WTC11 (cell line): ENCODE measurements at regions of chr15 and their contacts with region 1.

Region 1: DNA sequence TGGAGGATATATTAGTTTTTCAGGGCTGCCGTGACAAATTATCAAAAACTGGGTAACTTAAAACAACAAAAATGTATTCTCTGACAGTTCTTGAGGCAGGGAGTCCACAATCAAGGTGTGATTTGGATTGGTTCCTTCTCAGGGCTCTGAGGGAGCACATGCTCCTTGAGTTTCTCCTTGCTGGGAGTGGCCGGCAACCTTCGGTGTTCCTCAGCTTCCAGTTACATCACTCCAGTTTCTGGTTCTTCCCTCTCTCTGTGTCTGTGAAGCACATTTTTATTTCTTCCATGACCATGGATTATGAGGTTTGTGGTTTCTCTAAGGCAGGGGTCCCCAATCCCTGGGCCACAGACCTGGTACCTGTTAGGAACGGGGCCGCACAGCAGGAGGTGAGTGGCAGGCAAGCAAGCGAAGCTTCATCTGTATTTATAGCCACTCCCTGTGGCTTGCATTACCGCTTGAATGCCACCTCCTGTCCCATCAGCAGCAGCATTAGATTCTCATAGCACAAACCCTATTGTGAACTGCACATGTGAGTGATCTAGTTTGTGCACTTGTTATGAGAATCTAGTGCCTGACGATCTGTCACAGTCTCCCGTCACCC is 24.3 kb downstream of the LRRC28 start:
- DNase-seq: peak; percentile 22
- ATAC-seq: 0 out of 2 replicates have a peak, but pooled peaks have one; percentile 16
- H3K4me3 Mint-ChIP-seq: no peak overlapping the region
- H3K27ac Mint-ChIP-seq: no peak overlapping the region
- H3K4me1 Mint-ChIP-seq: peaks cover 8% of the 10 kb centered on the region
- H3K27me3 Mint-ChIP-seq: no peaks in the 10 kb centered on the region
- CTCF ChIP-seq: no peak

Region 2: DNA sequence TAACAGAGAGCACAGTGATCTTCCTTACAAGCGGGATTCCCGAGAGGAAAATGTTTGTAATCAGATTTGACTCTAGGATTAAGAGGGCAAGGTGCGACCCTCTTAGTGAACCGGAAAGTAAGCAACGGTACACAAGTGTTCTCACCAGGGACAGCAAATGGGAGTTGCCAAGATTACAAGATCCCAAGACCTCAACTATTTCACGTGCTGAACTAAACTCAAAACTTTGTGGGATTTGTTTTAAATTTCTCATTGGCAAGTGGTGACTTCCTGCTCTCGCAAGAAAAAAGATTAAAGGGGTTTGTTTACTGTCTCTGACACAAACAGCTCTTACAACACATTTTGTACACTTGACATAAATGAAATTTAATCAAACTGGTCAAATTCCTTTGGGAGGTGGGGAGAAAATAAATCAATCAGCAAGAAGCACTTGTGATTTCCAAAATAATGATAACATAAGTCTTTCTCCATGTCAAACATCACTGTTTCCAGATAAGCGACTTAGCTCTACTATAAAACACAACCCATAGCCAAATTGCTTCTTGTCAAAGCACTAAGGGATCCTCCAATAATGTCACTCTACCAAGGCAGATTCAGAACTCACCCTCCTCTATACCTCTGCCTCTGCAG is 265.8 kb before region 1 on chr15:
- CTCF ChIA-PET with region 1: no interaction called
- POLR2A ChIA-PET with region 1: no interaction called
- DNase-seq: no peak
- ATAC-seq: no peak
- H3K4me3 Mint-ChIP-seq: no peak overlapping the region
- H3K27ac Mint-ChIP-seq: no peak overlapping the region; the same call in 1 of the 2 replicates
- H3K4me1 Mint-ChIP-seq: no peaks in the 10 kb centered on the region
- H3K27me3 Mint-ChIP-seq: no peaks in the 10 kb centered on the region
- CTCF ChIP-seq: no peak

Region 3: DNA sequence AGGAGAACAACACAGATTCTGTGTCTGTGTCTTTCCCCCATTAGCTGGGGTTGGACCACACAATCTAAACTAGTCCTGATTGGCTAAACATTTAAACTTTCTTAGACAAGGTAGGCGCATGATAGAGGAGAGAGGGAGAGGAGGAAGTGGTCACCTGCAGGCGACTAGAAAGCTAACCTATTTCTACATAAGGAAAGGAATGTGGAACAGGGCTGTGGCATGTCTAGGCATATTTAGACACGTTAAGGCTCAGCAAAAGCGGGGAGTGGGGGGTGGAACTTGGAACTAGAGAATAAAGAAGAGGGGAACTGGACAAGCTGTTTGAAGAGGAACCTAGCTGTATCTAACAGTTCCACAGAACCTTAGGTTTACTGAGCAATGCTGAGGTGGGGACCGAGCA is 11.5 kb before region 1 on chr15:
- CTCF ChIA-PET with region 1: interaction called, 18 read pairs
- POLR2A ChIA-PET with region 1: no interaction called
- DNase-seq: no peak
- ATAC-seq: peak; percentile 79
- H3K4me3 Mint-ChIP-seq: no peak overlapping the region
- H3K27ac Mint-ChIP-seq: no peak overlapping the region
- H3K4me1 Mint-ChIP-seq: peaks cover 12% of the 10 kb centered on the region
- H3K27me3 Mint-ChIP-seq: no peaks in the 10 kb centered on the region
- CTCF ChIP-seq: no peak